CD4-positive, alpha-beta T cell (primary cell): ENCODE measurements at regions of chr22 and their contacts with region 1.

Region 1: GRCh38 chr22:44219101-44219870 is 38.6 kb downstream of the PARVG start:
- DNase-seq: no peak
- ATAC-seq: no peak
- H3K4me3 ChIP-seq: no peak overlapping the region
- H3K4me3 Mint-ChIP-seq: no peak overlapping the region
- H3K27ac ChIP-seq: no peak overlapping the region
- H3K27ac Mint-ChIP-seq: no peak overlapping the region
- H3K4me1 ChIP-seq: no peaks in the 10 kb centered on the region
- H3K4me1 Mint-ChIP-seq: no peaks in the 10 kb centered on the region
- H3K27me3 ChIP-seq: no peaks in the 10 kb centered on the region
- H3K27me3 Mint-ChIP-seq: no peaks in the 10 kb centered on the region
- CTCF ChIP-seq: no peak

Region 2: DNA sequence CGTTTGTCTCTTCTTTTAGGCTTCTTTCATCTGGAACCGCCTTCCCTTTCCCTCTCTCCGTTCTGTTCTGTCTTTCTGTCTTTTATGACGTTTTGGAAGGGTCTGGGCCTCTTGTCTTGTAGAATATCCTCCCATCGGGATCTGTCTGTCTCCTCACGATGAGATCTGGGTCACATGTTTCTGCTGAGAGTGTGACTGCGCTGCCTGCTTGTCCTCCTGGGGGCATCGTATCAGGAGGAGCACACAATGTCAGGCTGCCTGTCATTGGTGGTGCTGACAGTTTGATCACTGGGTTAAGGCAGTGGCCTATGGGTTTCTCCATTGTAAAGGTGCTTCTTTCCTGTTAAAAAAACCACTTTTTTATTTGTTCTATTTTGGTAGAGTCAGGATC is 99.0 kb before region 1 on chr22:
- CTCF ChIA-PET with region 1: no interaction called
- POLR2A ChIA-PET with region 1: no interaction called
- intact Hi-C with region 1: loop called in 1 of 2 experiments (anchors 5 kb)
- DNase-seq: no peak
- ATAC-seq: no peak
- H3K4me3 ChIP-seq: no peak overlapping the region
- H3K4me3 Mint-ChIP-seq: no peak overlapping the region
- H3K27ac ChIP-seq: no peak overlapping the region
- H3K27ac Mint-ChIP-seq: no peak overlapping the region
- H3K4me1 ChIP-seq: no peaks in the 10 kb centered on the region
- H3K4me1 Mint-ChIP-seq: no peaks in the 10 kb centered on the region
- H3K27me3 ChIP-seq: no peaks in the 10 kb centered on the region
- H3K27me3 Mint-ChIP-seq: no peaks in the 10 kb centered on the region
- CTCF ChIP-seq: no peak

Region 3: DNA sequence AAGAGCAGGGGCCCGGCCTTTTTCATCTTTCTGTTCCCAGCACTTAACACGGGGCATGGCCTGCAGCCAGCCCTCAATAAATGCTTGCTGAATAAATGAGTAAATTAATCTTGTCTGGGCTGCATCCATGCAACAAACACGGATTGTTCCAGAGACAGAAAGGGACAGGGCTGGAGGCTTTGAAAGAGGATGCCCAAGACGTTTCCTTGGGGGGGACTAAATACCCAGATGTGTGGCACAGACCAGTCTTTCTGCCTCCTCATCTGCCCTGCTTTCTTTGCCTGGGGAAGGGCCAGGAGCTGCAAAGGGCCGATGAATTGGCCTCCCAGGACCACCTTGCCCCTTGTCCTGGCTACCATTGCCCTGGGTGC is 53.1 kb after region 1 on chr22:
- CTCF ChIA-PET with region 1: no interaction called
- POLR2A ChIA-PET with region 1: no interaction called
- intact Hi-C with region 1: no loop called
- DNase-seq: no peak
- ATAC-seq: no peak
- H3K4me3 ChIP-seq: no peak overlapping the region
- H3K4me3 Mint-ChIP-seq: no peak overlapping the region
- H3K27ac ChIP-seq: no peak overlapping the region
- H3K27ac Mint-ChIP-seq: no peak overlapping the region
- H3K4me1 ChIP-seq: no peaks in the 10 kb centered on the region
- H3K4me1 Mint-ChIP-seq: no peaks in the 10 kb centered on the region
- H3K27me3 ChIP-seq: no peaks in the 10 kb centered on the region
- H3K27me3 Mint-ChIP-seq: peaks cover 8% of the 10 kb centered on the region
- CTCF ChIP-seq: no peak